ENCODE measurements at regions of chr3 and their contacts with region 1.

Region 1: DNA sequence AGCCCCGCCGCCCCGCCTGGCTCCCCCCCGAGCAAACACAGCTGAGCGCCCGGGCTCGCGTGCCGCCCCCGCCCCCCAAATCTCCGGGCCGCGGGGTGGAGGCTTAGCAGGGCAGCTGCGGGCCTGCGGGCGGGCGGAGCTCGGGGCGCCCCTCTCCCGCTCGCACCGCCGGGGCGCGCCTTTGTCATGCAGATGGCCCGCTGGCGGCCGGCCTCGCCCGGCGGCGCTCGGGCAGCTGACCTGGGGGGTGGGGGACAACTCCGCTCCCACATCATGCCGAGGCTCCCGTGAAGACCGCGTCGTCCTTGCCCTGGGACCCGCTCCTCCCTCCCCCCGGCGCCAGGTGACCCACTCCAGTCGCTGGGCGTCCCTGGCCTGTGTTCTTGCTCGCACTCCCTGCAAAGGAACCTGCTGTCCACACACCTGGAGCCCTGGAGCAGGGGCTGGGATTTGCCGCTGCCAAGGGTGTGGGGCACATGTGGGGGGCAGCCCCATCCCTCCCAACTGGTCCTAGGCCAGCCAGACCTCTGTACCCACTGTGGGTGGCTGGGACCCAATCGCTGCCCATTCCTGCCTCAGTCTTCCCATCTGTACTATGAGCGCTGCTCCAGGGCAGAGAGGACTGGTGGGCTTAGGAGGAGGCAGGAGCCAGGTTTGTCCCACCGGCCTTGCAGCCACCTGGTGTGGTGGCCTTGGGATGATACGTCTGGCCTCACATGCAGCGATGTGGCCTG is 33.6 kb downstream of the DNAJB8 start:
- DNase-seq: no peak
- ATAC-seq: no peak
- H3K4me3 ChIP-seq: no peak overlapping the region
- H3K4me3 Mint-ChIP-seq: peak overlapping the region; percentile 51
- H3K27ac ChIP-seq: no peak overlapping the region
- H3K27ac Mint-ChIP-seq: no peak overlapping the region
- H3K4me1 ChIP-seq: no peaks in the 10 kb centered on the region
- H3K4me1 Mint-ChIP-seq: peaks cover 10% of the 10 kb centered on the region
- H3K27me3 ChIP-seq: peaks cover 8 to 9% of the 10 kb centered on the region in 2 experiments
- H3K27me3 Mint-ChIP-seq: peaks cover 38% of the 10 kb centered on the region
- CTCF ChIP-seq: no peak

Region 2: DNA sequence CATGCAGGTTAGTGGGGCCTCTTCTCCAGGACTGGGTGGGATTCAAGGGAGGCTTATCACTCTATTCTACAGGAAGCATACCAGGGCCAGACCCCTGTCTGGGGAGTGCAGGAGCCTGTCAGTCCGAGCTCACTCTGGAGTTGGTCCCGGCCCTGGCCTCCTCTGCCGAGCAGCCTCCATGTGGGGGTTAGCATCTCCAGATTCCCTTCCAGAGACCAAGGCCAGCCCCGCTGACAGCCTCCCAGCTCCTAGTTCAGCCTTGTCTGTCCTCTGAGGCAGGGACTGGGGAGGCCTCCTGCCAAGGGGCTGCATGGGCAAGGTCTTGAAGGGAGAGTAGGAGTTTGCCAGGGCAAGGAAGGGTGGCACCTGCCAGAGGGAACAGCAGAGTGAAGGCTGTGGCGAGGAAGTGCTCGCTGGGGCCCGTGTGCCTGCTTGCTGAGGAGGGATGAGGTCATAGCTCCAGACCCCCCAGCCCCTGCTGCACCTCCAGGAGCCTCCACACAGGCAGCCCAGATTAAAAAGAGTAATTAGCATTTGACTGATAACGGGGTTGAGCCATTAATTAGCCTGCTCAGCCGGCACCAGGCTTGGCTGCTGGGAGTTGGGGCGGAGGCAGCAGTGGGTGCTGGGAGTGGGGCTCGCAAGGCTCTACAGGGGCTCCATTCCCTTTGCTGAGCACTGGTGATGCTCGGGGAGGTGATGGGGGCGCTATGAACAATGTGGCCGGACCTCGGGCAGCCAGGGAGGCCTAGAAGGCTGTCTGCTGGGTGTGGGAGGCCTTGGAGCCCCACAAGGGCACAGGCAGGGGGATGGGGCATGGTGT is 20.7 kb before region 1 on chr3:
- CTCF ChIA-PET with region 1: no interaction called
- POLR2A ChIA-PET with region 1: no interaction called
- intact Hi-C with region 1: loop called in 1 of 2 experiments (anchors 1 kb)
- DNase-seq: no peak
- ATAC-seq: no peak
- H3K4me3 ChIP-seq: no peak overlapping the region
- H3K4me3 Mint-ChIP-seq: no peak overlapping the region
- H3K27ac ChIP-seq: no peak overlapping the region
- H3K27ac Mint-ChIP-seq: no peak overlapping the region
- H3K4me1 ChIP-seq: no peaks in the 10 kb centered on the region
- H3K4me1 Mint-ChIP-seq: no peaks in the 10 kb centered on the region
- H3K27me3 ChIP-seq: no peaks in the 10 kb centered on the region
- H3K27me3 Mint-ChIP-seq: no peaks in the 10 kb centered on the region
- CTCF ChIP-seq: no peak

Region 3: GRCh38 chr3:128655531-128655930 is 222.4 kb after region 1 on chr3:
- CTCF ChIA-PET with region 1: no interaction called
- POLR2A ChIA-PET with region 1: no interaction called
- intact Hi-C with region 1: no loop called
- DNase-seq: no peak
- ATAC-seq: no peak
- H3K4me3 ChIP-seq: no peak overlapping the region
- H3K4me3 Mint-ChIP-seq: peak overlapping the region; percentile 59
- H3K27ac ChIP-seq: no peak overlapping the region
- H3K27ac Mint-ChIP-seq: no peak overlapping the region
- H3K4me1 ChIP-seq: peaks cover 4% of the 10 kb centered on the region
- H3K4me1 Mint-ChIP-seq: peaks cover 14% of the 10 kb centered on the region
- H3K27me3 ChIP-seq: no peaks in the 10 kb centered on the region
- H3K27me3 Mint-ChIP-seq: no peaks in the 10 kb centered on the region
- CTCF ChIP-seq: no peak